Spleen (tissue), 13 donors: ENCODE measurements at regions of chr1 and their contacts with region 1.

Region 1: DNA sequence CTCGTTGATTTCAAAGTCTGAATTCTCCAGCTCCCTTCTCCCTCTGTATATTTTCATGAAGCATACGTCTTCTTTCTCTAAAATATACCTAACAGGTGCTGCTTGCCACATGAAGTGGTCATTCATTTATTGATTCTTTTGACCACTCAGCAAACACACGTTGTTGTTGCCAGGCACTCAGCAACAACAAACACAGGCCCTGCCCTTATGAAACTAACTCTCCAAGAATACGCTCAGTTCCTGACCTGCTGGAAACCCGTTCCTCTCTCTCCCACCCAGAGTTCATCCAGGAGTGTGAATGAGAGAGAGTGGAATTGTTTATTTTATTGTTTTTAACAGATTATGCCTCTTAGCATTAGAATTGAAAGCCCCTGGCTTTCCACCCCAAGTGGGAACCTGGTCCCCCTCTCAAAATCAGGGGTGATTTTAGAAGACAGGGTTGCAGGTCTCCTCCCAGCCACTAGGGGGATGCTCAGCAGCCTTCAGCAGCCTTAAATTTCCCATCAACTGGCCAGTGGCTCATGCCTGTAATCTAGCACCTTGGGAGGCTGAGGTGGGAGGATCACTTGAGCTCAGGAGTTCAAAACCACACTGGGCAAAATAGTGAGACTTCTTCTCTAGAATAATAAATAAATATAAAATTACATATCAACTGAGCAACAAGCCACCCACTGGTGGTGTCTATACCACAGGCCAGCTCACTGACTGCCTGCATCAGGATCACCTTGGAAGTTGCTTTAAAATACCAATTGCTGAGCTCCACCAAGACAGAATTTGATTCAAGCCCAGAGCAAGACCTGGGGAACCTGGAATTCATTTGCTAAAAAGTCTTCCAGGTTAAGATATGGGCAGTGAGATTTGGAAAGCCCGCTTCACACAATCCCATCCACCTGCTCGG is 181.0 kb upstream of the KLHDC7A start:
- DNase-seq: no peak
- H3K4me3 ChIP-seq: no peak overlapping the region
- H3K27ac ChIP-seq: no peak overlapping the region
- H3K4me1 ChIP-seq: no peaks in the 10 kb centered on the region
- H3K27me3 ChIP-seq: peaks cover 0 to 68% (median 0%) of the 10 kb centered on the region in 7 donors
- CTCF ChIP-seq: peak in 10 of 11 experiments; percentile 11 to 78 (median 65)
- POLR2A ChIP-seq: no peak

Region 2: GRCh38 chr1:16999863-17000262 is 1299.8 kb before region 1 on chr1:
- intact Hi-C with region 1: no loop called
- DNase-seq: no peak
- H3K4me3 ChIP-seq: no peak overlapping the region
- H3K27ac ChIP-seq: no peak overlapping the region
- H3K4me1 ChIP-seq: no peaks in the 10 kb centered on the region
- H3K27me3 ChIP-seq: no peaks in the 10 kb centered on the region
- CTCF ChIP-seq: no peak
- POLR2A ChIP-seq: no peak

Region 3: DNA sequence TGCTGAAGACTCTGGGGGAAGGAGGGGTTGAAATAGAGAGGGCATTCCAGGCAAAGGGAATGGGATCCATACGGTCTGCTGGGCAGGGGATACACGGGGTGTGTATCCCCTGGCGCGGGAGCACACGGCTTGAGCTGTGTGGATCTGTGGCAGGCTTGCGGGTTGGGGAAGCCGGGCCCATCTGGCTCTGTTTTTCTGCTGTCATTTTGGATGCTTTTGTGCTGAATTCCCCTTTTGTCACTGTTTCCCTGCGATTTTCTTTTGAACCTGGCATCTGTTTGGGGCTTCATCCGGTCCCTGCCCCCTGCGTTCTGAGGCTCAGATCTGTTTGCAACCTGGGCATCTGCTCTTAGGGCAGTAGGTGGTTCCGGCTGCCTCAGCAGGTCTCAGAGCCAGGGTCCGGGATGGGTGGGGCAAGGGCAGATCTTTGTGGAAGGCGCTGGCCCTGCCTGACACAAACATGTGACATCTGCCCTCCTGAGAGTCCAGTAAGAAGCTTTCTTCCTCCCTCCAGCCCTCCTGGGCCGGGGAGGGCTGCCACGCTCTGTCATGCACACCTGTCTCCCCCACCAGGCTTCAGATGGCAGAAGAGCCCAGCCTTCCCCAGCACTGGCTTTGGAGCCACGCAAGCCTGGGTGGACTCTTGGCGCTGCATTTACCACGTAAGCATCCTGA is 108.1 kb before region 1 on chr1:
- intact Hi-C with region 1: no loop called
- DNase-seq: no peak
- H3K4me3 ChIP-seq: no peak overlapping the region
- H3K27ac ChIP-seq: no peak overlapping the region
- H3K4me1 ChIP-seq: no peaks in the 10 kb centered on the region
- H3K27me3 ChIP-seq: peaks cover 0 to 67% (median 0%) of the 10 kb centered on the region in 7 donors
- CTCF ChIP-seq: no peak
- POLR2A ChIP-seq: no peak

Region 4: GRCh38 chr1:18264450-18265039 is 35.1 kb before region 1 on chr1:
- intact Hi-C with region 1: no loop called
- DNase-seq: no peak
- H3K4me3 ChIP-seq: no peak overlapping the region
- H3K27ac ChIP-seq: no peak overlapping the region
- H3K4me1 ChIP-seq: no peaks in the 10 kb centered on the region
- H3K27me3 ChIP-seq: peaks cover 0 to 49% (median 0%) of the 10 kb centered on the region in 7 donors
- CTCF ChIP-seq: no peak
- POLR2A ChIP-seq: no peak

Region 5: DNA sequence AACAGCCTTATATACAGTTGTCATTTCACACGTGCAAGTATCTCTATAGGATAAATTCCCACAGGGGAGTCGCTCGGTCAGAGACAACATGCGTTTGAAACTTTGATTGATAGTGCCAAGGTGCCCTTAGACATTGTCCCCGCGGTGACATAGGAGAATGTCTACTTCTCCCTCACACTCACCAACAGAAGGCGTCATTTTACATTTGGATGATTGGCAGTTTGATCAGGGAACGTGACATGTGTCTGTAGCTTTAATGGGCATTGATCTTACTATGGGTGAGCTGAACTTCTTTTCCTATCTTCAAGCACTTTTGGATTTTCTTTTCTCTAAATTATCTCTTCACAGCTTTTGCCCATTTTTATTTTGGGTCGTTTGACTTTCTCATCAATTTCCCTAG is 288.4 kb after region 1 on chr1:
- intact Hi-C with region 1: loop called (anchors 5 kb)
- DNase-seq: no peak
- H3K4me3 ChIP-seq: no peak overlapping the region
- H3K27ac ChIP-seq: no peak overlapping the region
- H3K4me1 ChIP-seq: no peaks in the 10 kb centered on the region
- H3K27me3 ChIP-seq: peaks cover 0 to 69% (median 0%) of the 10 kb centered on the region in 7 donors
- CTCF ChIP-seq: no peak
- POLR2A ChIP-seq: no peak